ENCODE measurements at regions of chr2 and their contacts with region 1.

Region 1: GRCh38 chr2:127810619-127811396 is at the start of gene WDR33:
- DNase-seq: peak; percentile 92 to 95 (median 95)
- ATAC-seq: peak; percentile 90 to 98 (median 98)
- H3K4me3 ChIP-seq: peak within 1 kb of the TSS; percentile 70 to 88 (median 78)
- H3K27ac ChIP-seq: peak within 1 kb of the TSS; percentile 87 to 99 (median 97)
- H3K4me1 ChIP-seq: peaks cover 0 to 55% (median 19%) of the 10 kb centered on the region in 4 donors
- H3K27me3 ChIP-seq: no peaks in the 10 kb centered on the region
- CTCF ChIP-seq: peak; percentile 17 to 23 (median 19)
- POLR2A ChIP-seq: peak; percentile 79
- total RNA-seq, gene WDR33: 15.6 to 38.3 (median 28.0) TPM

Region 2: DNA sequence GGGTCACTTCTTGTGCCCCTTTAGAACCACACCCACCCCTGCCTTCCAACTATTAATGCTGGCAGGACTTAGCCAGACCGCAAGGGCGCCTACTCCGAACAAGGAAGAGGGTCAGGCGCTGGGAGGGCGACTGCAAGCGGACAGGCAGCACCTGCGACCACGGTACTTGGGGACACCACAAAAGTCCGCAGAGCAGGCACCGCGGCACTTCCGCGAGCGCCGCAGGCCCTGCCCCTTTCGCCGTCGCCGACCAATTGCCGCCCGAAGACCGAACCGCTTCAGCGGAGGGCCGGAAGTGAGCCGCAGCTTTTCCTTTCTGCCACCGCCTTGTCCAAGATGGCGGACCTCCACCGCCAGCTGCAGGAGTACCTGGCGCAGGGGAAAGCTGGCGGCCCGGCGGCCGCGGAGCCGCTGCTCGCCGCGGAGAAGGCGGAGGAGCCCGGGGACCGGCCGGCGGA is 109.6 kb before region 1 on chr2 and contains the start of gene SFT2D3:
- intact Hi-C with region 1: loop called in 1 of 2 experiments (anchors 2 kb)
- DNase-seq: peak; percentile 95 to 97 (median 96)
- ATAC-seq: peak; percentile 82 to 90 (median 84)
- H3K4me3 ChIP-seq: peak within 1 kb of the TSS; percentile 56 to 77 (median 63)
- H3K27ac ChIP-seq: peak within 1 kb of the TSS; percentile 93 to 99 (median 94)
- H3K4me1 ChIP-seq: peaks cover 0 to 49% (median 21%) of the 10 kb centered on the region in 4 donors
- H3K27me3 ChIP-seq: no peaks in the 10 kb centered on the region
- CTCF ChIP-seq: no peak
- POLR2A ChIP-seq: peak; percentile 98
- total RNA-seq, gene SFT2D3: 1.6 to 4.7 (median 3.4) TPM

Measured in right lobe of liver (tissue), 6 donors.